PC-3 (cell line): ENCODE measurements at regions of chr5 and their contacts with region 1.

Region 1: DNA sequence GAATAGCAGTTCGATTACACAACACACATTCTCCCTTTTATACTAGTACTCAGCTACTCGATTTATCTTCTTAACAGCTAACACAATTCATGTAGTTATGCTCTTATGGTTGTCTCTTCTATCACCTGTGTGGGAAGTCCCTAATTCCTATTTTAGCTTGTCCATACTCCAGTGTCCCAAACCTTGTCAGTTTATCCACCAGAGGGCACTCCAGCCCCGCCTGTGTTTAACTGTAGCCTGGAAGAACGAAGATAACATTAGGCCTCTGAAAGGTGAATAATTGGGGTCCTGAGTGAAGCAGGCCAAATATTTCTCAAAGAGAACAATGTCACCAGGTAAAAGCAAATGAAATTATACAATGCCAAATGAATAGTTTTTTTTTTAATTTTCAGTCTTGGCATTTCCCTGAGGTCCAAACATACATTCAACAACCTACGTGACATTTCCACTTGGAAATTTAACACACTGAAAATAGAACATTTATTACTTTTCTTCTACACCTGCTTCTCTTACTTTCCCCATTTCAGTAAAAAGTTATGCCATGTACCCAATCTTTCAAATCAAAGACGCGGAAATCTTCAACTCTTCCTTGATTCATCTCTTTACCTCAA is 560.7 kb downstream of the HTR1A start:
- DNase-seq: peak; percentile 75
- ATAC-seq: peak; percentile 89
- H3K4me3 ChIP-seq: no peak overlapping the region
- H3K27ac ChIP-seq: no peak overlapping the region
- H3K4me1 ChIP-seq: no peaks in the 10 kb centered on the region
- H3K27me3 ChIP-seq: no peaks in the 10 kb centered on the region
- CTCF ChIP-seq: peak; percentile 92

Region 2: DNA sequence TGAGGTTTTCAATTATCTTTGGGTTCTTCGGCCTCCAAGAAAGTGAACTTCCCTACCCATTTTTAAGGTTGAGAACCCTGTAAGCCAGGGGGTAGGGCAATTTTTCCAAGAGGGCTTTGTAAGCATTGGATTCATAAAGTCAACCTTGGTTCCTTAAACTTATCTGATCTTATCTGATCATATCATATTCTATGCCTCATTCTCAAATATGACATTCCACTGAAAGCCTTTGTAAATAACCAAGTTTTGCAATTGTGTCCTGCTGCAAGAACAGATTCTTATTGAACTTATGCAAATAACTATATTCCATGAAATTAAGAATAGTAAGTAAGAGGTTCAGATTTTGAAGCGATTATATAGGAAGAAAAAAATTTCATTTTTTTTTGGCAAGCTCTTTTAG is 173.4 kb before region 1 on chr5:
- CTCF ChIA-PET with region 1: no interaction called
- POLR2A ChIA-PET with region 1: no interaction called
- intact Hi-C with region 1: loop called (anchors 5 kb)
- DNase-seq: peak; percentile 48
- ATAC-seq: peak; percentile 51
- H3K4me3 ChIP-seq: no peak overlapping the region
- H3K27ac ChIP-seq: no peak overlapping the region
- H3K4me1 ChIP-seq: peaks cover 7% of the 10 kb centered on the region; the same call in 1 of the 2 replicates
- H3K27me3 ChIP-seq: no peaks in the 10 kb centered on the region
- CTCF ChIP-seq: no peak

Region 3: GRCh38 chr5:63245271-63245670 is 156.3 kb before region 1 on chr5:
- CTCF ChIA-PET with region 1: no interaction called
- POLR2A ChIA-PET with region 1: no interaction called
- intact Hi-C with region 1: loop called (anchors 5 kb)
- DNase-seq: peak; percentile 60
- ATAC-seq: peak; percentile 65
- H3K4me3 ChIP-seq: no peak overlapping the region
- H3K27ac ChIP-seq: 0 out of 2 replicates have a peak overlapping the region, but pooled peaks have one; percentile 23
- H3K4me1 ChIP-seq: peaks cover 15% of the 10 kb centered on the region; the same call in 1 of the 2 replicates
- H3K27me3 ChIP-seq: no peaks in the 10 kb centered on the region
- CTCF ChIP-seq: no peak

Region 4: GRCh38 chr5:63822614-63823013 is 421.1 kb after region 1 on chr5:
- CTCF ChIA-PET with region 1: interaction called, 4 read pairs
- POLR2A ChIA-PET with region 1: no interaction called
- intact Hi-C with region 1: loop called (anchors 1 kb)
- DNase-seq: peak; percentile 28
- ATAC-seq: peak; percentile 92
- H3K4me3 ChIP-seq: no peak overlapping the region
- H3K27ac ChIP-seq: no peak overlapping the region
- H3K4me1 ChIP-seq: no peaks in the 10 kb centered on the region
- H3K27me3 ChIP-seq: no peaks in the 10 kb centered on the region
- CTCF ChIP-seq: 0 out of 2 replicates have a peak, but pooled peaks have one; percentile 31

Region 5: DNA sequence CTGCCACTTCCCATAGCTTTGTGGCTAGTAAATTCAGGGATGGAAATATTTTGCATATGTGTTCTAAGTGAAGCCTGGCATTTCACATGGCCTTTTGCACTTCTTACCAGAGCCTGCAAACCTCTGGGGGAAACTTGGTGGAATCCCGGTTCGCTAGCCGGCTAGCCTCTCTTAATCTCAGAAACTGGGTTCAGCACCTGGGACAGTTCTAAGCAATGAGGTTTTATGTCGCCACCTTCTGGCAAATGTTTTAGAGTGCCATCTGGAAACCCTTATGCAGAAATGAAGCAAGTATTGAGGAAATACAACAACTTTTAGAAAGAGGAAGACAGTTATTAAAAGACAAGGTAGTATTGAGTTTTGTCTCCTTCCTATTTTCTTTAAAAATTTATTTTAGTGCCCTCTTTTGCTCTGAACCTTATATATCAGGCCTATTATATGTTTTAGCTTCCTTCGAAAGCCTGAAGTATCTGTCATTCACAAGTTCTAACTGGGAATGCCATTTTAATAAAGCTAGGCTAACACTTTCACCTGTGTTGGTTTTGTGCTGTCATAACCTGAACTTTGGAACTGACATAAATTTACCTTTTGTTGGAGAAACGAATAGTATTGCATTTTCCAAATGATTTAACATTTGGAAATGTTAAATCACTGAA is 561.7 kb after region 1 on chr5:
- CTCF ChIA-PET with region 1: no interaction called
- POLR2A ChIA-PET with region 1: no interaction called
- intact Hi-C with region 1: loop called (anchors 1 kb)
- DNase-seq: peak; percentile 74
- ATAC-seq: peak; percentile 66
- H3K4me3 ChIP-seq: no peak overlapping the region
- H3K27ac ChIP-seq: no peak overlapping the region
- H3K4me1 ChIP-seq: no peaks in the 10 kb centered on the region
- H3K27me3 ChIP-seq: peaks cover 18% of the 10 kb centered on the region; the same call in 1 of the 2 replicates
- CTCF ChIP-seq: peak; percentile 84